ENCODE measurements at regions of chr11 and their contacts with region 1.

Region 1: GRCh38 chr11:35485656-35486322 is 39.6 kb downstream of the PAMR1 start:
- DNase-seq: peak; percentile 73 to 87 (median 85)
- ATAC-seq: peak; percentile 84 to 93
- H3K4me3 ChIP-seq: no peak overlapping the region
- H3K27ac ChIP-seq: no peak overlapping the region
- H3K4me1 ChIP-seq: no peaks in the 10 kb centered on the region
- H3K27me3 ChIP-seq: no peaks in the 10 kb centered on the region

Region 2: DNA sequence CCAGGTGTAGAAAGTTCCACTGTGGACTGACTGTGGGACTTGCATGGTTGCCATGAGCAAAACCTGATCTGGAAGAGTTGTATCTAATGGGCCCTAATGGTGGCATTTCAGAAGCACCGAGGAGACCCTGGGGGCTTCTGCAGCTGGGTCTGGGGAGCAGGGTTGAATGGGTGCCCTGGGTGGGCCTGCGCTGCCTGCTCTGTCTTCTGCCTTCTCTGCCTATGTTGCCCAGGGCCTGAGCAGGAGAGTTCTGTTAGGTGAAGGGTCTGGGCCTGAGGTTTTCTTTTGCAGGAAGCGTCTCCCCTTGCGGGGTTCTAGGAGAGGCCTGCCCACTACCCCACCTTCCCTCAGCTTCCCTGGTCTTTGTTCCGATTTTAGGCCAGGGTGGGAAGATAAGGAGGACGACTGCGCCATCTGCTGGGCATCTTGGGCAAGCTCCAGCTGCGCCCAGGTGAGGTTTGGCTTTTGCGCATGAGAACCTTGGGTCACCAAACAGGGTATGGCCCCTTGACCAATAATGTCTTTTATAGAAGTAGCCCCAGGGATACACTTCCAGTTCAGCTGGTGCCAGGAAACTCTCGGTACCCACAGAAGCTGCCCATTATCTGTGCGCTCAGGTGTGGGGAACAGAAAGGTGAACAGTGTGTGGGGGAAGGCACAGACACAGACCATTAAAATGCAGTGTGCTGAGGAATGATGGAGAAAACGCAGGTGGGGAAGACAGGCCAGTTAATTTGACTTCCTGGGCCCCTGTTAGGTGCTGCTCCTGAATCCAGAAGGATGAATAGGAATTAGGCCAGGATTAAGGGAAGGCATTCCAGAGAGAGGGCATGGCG is 780.2 kb after region 1 on chr11:
- intact Hi-C with region 1: loop called in 1 of 4 experiments (anchors 10 kb)
- DNase-seq: peak; percentile 34 to 72 (median 64)
- ATAC-seq: peak; percentile 66 to 82
- H3K4me3 ChIP-seq: no peak overlapping the region
- H3K27ac ChIP-seq: no peak overlapping the region
- H3K4me1 ChIP-seq: no peaks in the 10 kb centered on the region
- H3K27me3 ChIP-seq: no peaks in the 10 kb centered on the region